ENCODE measurements at regions of chr2 and their contacts with region 1.

Region 1: DNA sequence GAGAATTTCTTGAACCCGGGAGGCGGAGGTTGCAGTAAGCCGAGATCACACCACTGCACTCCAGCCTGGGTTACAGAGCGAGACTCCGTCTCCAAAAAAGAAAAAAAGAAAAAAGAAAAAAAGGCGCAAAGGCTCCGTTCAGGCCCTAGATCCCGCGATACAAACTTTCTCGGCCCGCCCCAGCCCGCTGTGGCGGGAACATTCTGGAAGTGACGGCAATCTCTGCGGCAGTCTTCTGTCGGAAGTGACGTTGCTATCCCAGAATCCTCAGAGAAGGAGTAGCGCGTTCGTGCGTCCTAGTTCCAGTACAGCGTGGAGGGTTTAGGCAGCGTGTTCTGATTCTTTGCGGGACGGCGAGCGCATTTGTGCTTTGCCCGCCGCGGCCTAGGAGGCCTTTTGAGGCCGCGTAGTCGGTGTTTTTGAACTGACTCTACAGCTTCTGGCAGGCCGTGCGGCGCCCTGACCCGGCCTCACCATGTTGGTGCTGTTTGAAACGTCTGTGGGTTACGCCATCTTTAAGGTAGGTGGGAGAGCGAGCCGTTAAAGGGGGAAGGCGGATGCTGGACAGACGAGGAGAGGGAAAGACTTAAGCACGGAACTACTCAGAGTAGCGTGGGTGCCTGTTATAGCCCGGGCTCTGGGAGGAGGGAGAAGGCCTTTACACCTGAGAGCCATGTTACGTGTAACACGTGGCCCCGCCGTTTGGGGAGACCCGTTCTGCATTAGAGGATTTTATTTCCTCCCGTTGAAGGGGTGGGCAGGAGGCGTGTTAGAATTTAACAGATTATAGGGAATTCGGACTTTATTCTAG is at the start of gene NOP58:
- DNase-seq: peak; percentile 94
- H3K4me3 Mint-ChIP-seq: peak within 1 kb of the TSS; percentile 49
- H3K27ac Mint-ChIP-seq: peak within 1 kb of the TSS; percentile 64
- H3K4me1 Mint-ChIP-seq: peaks cover 25% of the 10 kb centered on the region
- H3K27me3 Mint-ChIP-seq: no peaks in the 10 kb centered on the region
- total RNA-seq, gene NOP58: 103 to 108 TPM

Region 2: DNA sequence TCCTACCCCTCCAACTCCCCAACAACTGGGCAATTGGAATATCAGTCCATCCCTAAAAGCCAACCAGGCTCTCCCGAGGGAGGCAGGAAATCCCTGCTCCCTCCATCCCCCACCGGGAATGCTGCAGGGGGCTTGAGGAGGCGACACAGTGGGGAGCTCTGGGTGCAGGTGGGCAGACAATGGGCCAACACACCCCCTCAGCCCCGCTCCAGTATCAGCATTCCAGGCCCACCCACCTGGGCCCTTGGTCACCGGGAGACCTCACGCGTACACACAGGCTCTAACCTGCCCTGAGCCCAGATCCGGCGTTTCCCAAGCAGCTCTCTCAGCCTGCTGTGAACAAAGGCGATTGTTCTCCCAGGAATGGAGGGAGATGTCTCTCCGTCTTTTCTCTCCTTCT is 269.7 kb before region 1 on chr2:
- CTCF ChIA-PET with region 1: no interaction called
- POLR2A ChIA-PET with region 1: no interaction called
- DNase-seq: no peak
- H3K4me3 Mint-ChIP-seq: no peak overlapping the region
- H3K27ac Mint-ChIP-seq: no peak overlapping the region
- H3K4me1 Mint-ChIP-seq: no peaks in the 10 kb centered on the region
- H3K27me3 Mint-ChIP-seq: peaks cover 1% of the 10 kb centered on the region

Region 3: DNA sequence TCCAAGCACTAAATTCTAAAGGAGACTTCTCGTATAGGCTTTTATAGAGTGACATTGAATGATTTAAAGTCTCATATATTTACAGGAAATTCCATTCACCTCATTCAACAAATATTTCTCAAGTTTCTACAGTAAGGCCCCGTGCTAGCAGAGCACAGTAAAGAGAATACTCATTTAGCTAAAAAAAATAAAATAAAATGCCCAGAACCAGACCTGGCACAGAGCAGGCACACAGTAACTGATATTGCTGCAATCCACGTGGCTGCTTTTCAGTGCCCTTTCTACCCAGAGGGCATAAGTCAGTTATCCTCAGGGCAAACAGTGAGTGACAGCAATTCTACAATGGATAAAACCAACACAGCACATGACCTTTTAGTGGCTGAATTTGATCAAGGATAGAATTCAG is 79.9 kb before region 1 on chr2:
- CTCF ChIA-PET with region 1: no interaction called
- POLR2A ChIA-PET with region 1: no interaction called
- DNase-seq: no peak
- H3K4me3 Mint-ChIP-seq: no peak overlapping the region
- H3K27ac Mint-ChIP-seq: no peak overlapping the region
- H3K4me1 Mint-ChIP-seq: no peaks in the 10 kb centered on the region
- H3K27me3 Mint-ChIP-seq: peaks cover 17% of the 10 kb centered on the region

Region 4: DNA sequence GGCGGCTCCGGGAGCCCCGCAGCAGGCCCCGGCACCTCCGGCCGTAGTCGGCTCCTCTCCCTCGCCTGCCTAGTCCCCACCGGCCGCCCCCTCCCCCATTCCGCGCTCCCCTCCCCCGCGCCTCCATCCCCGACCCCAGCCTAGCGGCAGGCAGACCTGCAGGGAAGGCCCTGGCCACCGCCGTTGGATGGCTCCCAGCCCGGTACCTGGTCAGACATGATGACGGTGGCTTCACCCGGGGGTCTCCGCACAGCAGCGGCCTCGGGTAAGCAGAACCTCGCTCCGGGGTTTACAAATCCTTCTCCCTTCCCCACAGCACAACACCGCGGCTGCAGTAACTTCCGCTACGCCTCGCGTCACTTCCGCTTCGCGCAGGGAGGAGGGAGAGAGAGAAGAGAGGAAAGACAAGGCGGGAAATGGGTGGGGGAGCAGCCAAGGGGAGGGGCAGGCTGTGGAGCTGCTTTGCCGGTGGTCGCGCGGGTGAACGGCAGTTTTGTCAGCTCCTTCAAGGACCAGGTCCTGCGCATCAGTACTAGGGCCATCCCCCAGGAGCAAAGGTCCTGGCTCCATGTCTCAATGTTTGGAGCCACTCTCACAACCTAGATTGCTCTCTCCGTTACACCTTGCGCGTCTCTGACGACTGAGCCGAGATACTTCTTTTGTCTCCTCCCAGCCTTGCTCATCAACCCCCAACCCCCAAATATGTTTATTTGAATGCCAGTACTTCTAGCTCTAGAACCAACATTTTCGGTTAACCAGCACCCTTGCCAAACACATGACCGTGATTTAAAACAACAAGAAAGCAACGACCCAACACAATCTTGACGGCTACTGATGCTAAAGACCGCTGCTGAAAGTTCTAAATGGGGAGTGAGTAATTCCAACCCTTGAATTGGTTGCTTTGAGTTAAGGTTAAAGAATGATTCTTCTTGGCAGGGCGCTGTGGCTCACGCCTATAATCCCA is 27.2 kb before region 1 on chr2 and contains the start of gene SUMO1:
- CTCF ChIA-PET with region 1: interaction called, 3 read pairs
- POLR2A ChIA-PET with region 1: interaction called, 57 read pairs
- DNase-seq: peak; percentile 94
- H3K4me3 Mint-ChIP-seq: peak within 1 kb of the TSS; percentile 96
- H3K27ac Mint-ChIP-seq: peak within 1 kb of the TSS; percentile 92
- H3K4me1 Mint-ChIP-seq: peaks cover 36% of the 10 kb centered on the region
- H3K27me3 Mint-ChIP-seq: no peaks in the 10 kb centered on the region
- total RNA-seq, gene SUMO1: 99.7 to 103 TPM

Region 5: DNA sequence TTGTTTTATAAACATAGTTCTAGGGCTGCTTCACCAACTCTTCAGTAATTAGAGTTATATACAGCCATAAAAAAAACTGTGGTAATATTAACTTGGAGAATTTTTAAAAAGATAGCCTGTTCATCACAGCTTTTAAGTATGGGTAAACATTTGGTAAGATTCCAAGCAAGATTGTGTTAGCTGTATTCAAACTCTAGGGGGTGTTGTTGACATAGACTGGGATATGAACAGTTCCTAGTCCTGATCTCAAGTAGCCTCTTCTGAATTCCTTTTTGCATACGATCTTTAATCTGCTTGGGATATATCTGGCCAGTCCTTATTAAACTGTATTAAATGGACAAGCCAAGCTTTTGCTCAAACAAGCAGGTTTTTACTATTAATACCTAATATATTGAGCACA is 13.3 kb after region 1 on chr2:
- CTCF ChIA-PET with region 1: interaction called, 9 read pairs
- POLR2A ChIA-PET with region 1: interaction called, 100 read pairs
- DNase-seq: no peak
- H3K4me3 Mint-ChIP-seq: no peak overlapping the region
- H3K27ac Mint-ChIP-seq: no peak overlapping the region
- H3K4me1 Mint-ChIP-seq: peaks cover 41% of the 10 kb centered on the region
- H3K27me3 Mint-ChIP-seq: no peaks in the 10 kb centered on the region